PC-9 (cell line): ENCODE measurements at regions of chr12 and their contacts with region 1.

Region 1: DNA sequence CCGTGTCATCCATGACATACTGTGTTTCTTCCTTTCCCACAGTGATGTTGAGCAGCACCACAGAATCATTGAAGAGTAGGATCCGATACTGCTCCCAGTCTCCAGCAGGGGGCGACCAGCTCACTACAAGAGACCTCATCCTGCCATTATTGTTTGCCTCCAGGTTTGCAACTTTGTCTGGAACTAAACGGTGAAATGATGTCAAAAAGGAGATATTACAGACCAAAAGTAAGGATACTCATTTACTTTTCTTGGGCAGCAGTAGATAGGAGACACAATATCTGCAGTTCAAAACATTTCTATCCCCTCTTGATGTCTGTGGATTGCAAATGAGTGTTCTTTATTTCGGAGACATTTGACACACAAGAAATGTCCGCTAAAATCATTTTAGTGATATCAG is 47.2 kb downstream of the PTPRB start:
- DNase-seq: peak in 1 of 2 experiments; percentile 57
- H3K4me3 ChIP-seq: no peak overlapping the region
- H3K27ac ChIP-seq: no peak overlapping the region
- H3K4me1 ChIP-seq: no peaks in the 10 kb centered on the region
- H3K27me3 ChIP-seq: no peaks in the 10 kb centered on the region
- CTCF ChIP-seq: peak; percentile 91

Region 2: DNA sequence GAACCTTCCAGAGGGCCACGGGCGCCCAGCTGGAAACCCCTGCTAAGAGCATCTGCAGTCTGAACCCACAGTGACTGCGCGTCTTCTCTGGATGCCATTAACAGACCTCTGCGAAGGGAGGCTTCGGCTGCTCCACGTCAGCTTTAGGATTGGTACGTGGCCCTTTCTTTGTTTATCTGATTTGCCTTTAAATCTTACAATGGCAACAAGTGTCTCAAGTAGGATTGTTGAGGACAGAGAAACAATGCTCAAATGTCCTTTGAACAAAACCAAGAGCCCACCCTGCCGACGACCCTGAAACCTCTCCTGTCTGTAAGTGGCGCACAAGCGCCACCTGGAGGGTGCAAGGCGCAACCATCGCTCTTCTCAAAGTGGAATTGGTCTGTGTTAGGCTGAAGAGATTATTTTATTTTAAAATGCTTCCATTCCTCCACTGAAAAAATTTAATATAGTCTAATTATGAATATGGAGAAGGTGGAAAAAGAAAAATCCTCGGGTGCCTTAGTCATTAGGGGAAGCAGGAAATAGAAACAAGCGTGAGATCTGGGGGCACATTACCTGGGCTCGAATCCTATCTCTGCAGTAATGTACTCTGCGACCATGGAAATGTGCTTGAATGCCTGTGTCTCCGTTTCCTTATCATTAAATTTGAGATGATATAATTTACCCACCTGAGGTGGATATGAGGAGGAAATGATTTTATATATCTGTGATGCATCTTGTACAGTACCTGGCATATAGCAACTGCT is 129.8 kb after region 1 on chr12:
- CTCF ChIA-PET with region 1: no interaction called
- POLR2A ChIA-PET with region 1: no interaction called
- intact Hi-C with region 1: loop called (anchors 1 kb)
- DNase-seq: no peak
- H3K4me3 ChIP-seq: no peak overlapping the region
- H3K27ac ChIP-seq: no peak overlapping the region
- H3K4me1 ChIP-seq: no peaks in the 10 kb centered on the region
- H3K27me3 ChIP-seq: no peaks in the 10 kb centered on the region
- CTCF ChIP-seq: peak; percentile 94

Region 3: DNA sequence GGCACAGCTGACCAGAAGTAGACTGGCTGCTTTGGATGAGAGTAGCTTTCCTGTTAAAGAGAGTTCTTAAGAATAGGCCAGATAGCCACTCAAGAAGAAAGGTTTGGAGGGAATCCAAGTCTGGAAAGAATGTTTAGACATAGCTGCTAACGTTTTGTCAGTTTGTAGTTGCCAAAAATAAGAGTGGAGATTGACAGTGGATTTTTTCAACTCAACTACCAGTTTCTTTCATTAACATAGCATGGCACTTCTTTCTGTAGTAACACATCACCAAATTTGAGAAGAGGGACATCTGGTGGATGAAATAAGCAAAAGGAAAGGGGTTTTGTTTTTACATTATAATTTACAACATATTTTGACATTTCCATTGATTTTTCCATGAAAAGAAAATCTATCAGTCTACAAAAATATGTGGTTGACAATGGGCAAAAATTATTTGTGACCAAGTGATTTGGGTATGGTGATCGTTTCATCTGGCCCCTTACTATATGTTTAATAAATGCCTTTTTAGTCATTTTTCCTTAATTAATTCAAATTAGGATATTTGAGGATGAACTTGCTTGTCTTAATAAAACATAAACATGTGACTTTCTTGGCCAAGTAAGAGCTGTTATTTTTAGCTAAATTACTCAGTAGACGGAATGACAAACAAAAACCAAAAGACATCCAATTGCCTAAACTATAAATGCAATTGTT is 259.4 kb after region 1 on chr12:
- CTCF ChIA-PET with region 1: no interaction called
- POLR2A ChIA-PET with region 1: no interaction called
- intact Hi-C with region 1: loop called (anchors 1 kb)
- DNase-seq: peak in 1 of 2 experiments; percentile 37
- H3K4me3 ChIP-seq: no peak overlapping the region
- H3K27ac ChIP-seq: no peak overlapping the region
- H3K4me1 ChIP-seq: no peaks in the 10 kb centered on the region
- H3K27me3 ChIP-seq: no peaks in the 10 kb centered on the region
- CTCF ChIP-seq: peak; percentile 63

Region 4: DNA sequence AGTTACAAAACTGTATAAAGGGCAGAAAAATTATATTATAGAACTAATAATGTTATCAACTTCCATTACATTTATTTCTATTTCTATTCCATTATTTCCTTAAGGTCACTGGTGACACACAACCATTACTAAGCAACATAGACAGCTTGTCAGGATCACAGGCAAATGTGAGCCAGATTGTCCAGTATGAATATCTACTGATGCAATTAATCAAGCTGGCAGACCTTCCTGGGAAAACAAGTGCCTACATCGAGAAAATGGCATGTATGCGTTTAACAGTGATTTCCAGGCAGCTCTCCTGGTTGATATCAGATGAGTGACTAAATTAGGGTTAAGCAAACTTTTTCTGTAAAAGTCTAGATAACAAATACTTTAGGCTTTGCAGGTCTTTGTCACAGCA is 604.6 kb after region 1 on chr12:
- CTCF ChIA-PET with region 1: no interaction called
- POLR2A ChIA-PET with region 1: no interaction called
- intact Hi-C with region 1: no loop called
- DNase-seq: no peak
- H3K4me3 ChIP-seq: no peak overlapping the region
- H3K27ac ChIP-seq: no peak overlapping the region
- H3K4me1 ChIP-seq: no peaks in the 10 kb centered on the region
- H3K27me3 ChIP-seq: no peaks in the 10 kb centered on the region
- CTCF ChIP-seq: no peak